ENCODE measurements at regions of chr17 and their contacts with region 1.

Region 1: GRCh38 chr17:76014184-76014924 is 12.8 kb downstream of the EVPL start:
- DNase-seq: peak; percentile 80
- H3K4me3 Mint-ChIP-seq: no peak overlapping the region
- H3K27ac Mint-ChIP-seq: no peak overlapping the region
- H3K4me1 Mint-ChIP-seq: peaks cover 2% of the 10 kb centered on the region
- H3K27me3 Mint-ChIP-seq: peaks cover 3% of the 10 kb centered on the region

Region 2: GRCh38 chr17:75904749-75905521 is 109.4 kb before region 1 on chr17 and contains the start of gene MRPL38:
- CTCF ChIA-PET with region 1: interaction called, 14 read pairs
- POLR2A ChIA-PET with region 1: interaction called, 3 read pairs
- DNase-seq: peak; percentile 98
- H3K4me3 Mint-ChIP-seq: peak within 1 kb of the TSS; percentile 87
- H3K27ac Mint-ChIP-seq: peak within 1 kb of the TSS; percentile 76
- H3K4me1 Mint-ChIP-seq: peaks cover 31% of the 10 kb centered on the region
- H3K27me3 Mint-ChIP-seq: no peaks in the 10 kb centered on the region
- total RNA-seq, gene MRPL38: 79.9 to 85.0 TPM

Region 3: GRCh38 chr17:76036497-76037261 is 22.3 kb after region 1 on chr17:
- CTCF ChIA-PET with region 1: interaction called, 11 read pairs
- POLR2A ChIA-PET with region 1: no interaction called
- DNase-seq: no peak
- H3K4me3 Mint-ChIP-seq: no peak overlapping the region
- H3K27ac Mint-ChIP-seq: no peak overlapping the region
- H3K4me1 Mint-ChIP-seq: no peaks in the 10 kb centered on the region
- H3K27me3 Mint-ChIP-seq: no peaks in the 10 kb centered on the region

Region 4: DNA sequence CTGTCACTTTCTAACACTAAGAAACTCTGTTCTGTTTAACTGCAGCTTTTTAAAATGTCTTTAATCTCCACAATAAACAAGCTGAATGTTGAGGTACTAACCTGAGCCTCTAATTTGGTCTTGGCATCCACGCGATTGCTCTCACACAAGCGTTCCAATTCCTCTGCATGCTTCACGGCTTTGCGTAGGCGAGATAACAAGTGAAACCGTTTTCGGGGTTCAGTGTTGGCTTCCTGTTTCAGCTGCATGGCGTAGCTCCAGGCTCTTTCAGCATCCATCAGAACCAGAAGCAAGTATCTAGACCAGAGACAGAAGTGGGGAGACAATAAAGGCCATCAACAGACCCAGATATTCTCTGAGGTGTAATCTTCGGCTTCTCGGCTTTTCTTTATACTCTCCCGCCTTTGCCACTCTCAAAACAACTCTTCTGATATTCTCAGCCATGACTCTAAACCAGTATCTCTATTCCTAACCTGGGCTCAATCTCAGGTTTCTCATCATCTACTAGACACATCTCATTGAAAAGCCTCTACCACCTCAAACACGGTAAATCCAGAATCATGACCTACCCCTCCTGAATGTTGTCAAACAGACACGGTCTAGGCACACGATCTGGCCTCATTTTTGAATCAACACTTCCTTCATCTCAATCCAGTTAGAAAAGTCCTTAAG is 49.7 kb after region 1 on chr17:
- CTCF ChIA-PET with region 1: interaction called, 22 read pairs
- POLR2A ChIA-PET with region 1: no interaction called
- DNase-seq: peak; percentile 64
- H3K4me3 Mint-ChIP-seq: peak overlapping the region; percentile 60
- H3K27ac Mint-ChIP-seq: peak overlapping the region; percentile 88
- H3K4me1 Mint-ChIP-seq: peaks cover 29% of the 10 kb centered on the region
- H3K27me3 Mint-ChIP-seq: no peaks in the 10 kb centered on the region

Region 5: DNA sequence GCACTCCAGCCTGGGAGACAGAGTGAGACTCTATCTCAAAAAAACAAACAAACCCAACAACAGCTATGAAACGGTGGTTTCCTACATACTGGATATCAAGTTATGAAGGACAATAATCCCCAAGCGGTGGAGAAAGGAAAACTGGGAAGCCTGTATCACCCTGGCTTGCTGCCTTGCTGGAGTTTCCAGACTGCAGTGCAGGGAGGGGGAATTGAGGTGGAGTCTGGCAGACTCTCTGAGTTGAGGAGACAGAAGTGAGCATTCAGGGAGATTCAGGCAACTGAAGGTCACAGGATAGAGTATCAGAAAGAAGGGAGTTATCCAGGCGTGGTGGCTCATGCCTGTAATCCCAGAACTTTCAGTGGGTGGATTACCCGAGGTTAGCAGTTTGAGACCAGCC is 281.8 kb after region 1 on chr17:
- CTCF ChIA-PET with region 1: interaction called, 37 read pairs
- POLR2A ChIA-PET with region 1: no interaction called
- DNase-seq: no peak
- H3K4me3 Mint-ChIP-seq: no peak overlapping the region
- H3K27ac Mint-ChIP-seq: no peak overlapping the region
- H3K4me1 Mint-ChIP-seq: peaks cover 3% of the 10 kb centered on the region
- H3K27me3 Mint-ChIP-seq: no peaks in the 10 kb centered on the region